H1 (cell line): ENCODE measurements at regions of chr11 and their contacts with region 1.

Region 1: GRCh38 chr11:18115360-18116127 is 9.7 kb upstream of the SAAL1 start:
- DNase-seq: peak; percentile 60 to 84
- H3K4me3 ChIP-seq: no peak overlapping the region
- H3K27ac ChIP-seq: no peak overlapping the region
- H3K4me1 ChIP-seq: no peaks in the 10 kb centered on the region
- H3K27me3 ChIP-seq: peaks cover 0 to 4% (median 2%) of the 10 kb centered on the region in 4 experiments; a peak in 4 of 7 replicates
- CTCF ChIP-seq: peak; percentile 78 to 90 (median 88)
- EP300 ChIP-seq: no peak
- POLR2A ChIP-seq: no peak
- RAD21 ChIP-seq: peak; percentile 95 to 96

Region 2: GRCh38 chr11:17827006-17827405 is 288.5 kb before region 1 on chr11:
- CTCF ChIA-PET with region 1: no interaction called
- POLR2A ChIA-PET with region 1: no interaction called
- DNase-seq: no peak
- H3K4me3 ChIP-seq: no peak overlapping the region
- H3K27ac ChIP-seq: no peak overlapping the region
- H3K4me1 ChIP-seq: 0 out of 7 replicates have a peak, but pooled peaks cover 0 to 2% (median 0%) of the 10 kb centered on the region in 4 experiments
- H3K27me3 ChIP-seq: no peaks in the 10 kb centered on the region
- CTCF ChIP-seq: peak in 2 of 3 experiments; percentile 64 to 72; a peak in 3 of 4 replicates
- EP300 ChIP-seq: no peak
- POLR2A ChIP-seq: no peak
- RAD21 ChIP-seq: peak; percentile 72 to 84

Region 3: GRCh38 chr11:17954395-17955252 is 160.9 kb before region 1 on chr11:
- CTCF ChIA-PET with region 1: no interaction called
- POLR2A ChIA-PET with region 1: no interaction called
- DNase-seq: no peak
- H3K4me3 ChIP-seq: no peak overlapping the region
- H3K27ac ChIP-seq: no peak overlapping the region
- H3K4me1 ChIP-seq: no peaks in the 10 kb centered on the region
- H3K27me3 ChIP-seq: no peaks in the 10 kb centered on the region
- CTCF ChIP-seq: no peak
- EP300 ChIP-seq: no peak
- POLR2A ChIP-seq: no peak
- RAD21 ChIP-seq: no peak

Region 4: DNA sequence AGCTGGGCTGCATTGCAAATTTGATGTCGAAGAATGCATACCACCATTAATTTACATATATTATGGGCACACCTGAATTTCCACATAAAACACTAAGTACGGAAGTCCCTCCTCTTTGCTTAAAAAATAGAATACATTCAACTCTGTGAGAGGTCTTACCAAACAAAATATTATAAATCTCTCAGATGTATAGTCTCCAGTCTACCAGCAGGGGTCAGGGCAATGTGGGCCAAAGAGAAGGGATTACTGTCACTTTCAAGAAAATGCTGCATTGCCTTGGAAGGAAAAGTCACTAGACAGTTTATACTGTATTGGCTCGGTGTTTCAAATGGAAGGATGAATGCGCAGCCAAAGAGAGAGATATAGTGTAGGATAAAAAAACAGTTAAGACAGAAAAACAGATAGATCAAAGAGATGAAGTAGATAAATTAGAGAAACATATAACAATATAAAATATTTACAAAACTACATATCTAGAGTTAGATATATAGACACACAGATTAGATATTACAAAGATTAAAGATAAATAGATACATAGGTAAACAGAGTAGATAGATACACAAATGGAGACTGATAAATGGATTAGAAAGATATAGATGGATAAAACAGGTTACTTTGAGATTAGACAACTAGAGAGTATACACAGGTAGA is 123.6 kb before region 1 on chr11:
- CTCF ChIA-PET with region 1: no interaction called
- POLR2A ChIA-PET with region 1: no interaction called
- DNase-seq: no peak
- H3K4me3 ChIP-seq: no peak overlapping the region
- H3K27ac ChIP-seq: no peak overlapping the region
- H3K4me1 ChIP-seq: no peaks in the 10 kb centered on the region
- H3K27me3 ChIP-seq: no peaks in the 10 kb centered on the region
- CTCF ChIP-seq: peak in 2 of 3 experiments; percentile 55 to 71; a peak in 3 of 4 replicates
- EP300 ChIP-seq: no peak
- POLR2A ChIP-seq: no peak
- RAD21 ChIP-seq: peak; percentile 57 to 67

Region 5: GRCh38 chr11:18171377-18172000 is 55.9 kb after region 1 on chr11:
- CTCF ChIA-PET with region 1: interaction called, 43 read pairs
- POLR2A ChIA-PET with region 1: interaction called, 4 read pairs
- DNase-seq: no peak
- H3K4me3 ChIP-seq: no peak overlapping the region
- H3K27ac ChIP-seq: no peak overlapping the region
- H3K4me1 ChIP-seq: no peaks in the 10 kb centered on the region
- H3K27me3 ChIP-seq: no peaks in the 10 kb centered on the region
- CTCF ChIP-seq: peak; percentile 72 to 80 (median 74)
- EP300 ChIP-seq: no peak
- POLR2A ChIP-seq: no peak
- RAD21 ChIP-seq: peak; percentile 78

Region 6: GRCh38 chr11:18203723-18204122 is 88.2 kb after region 1 on chr11:
- CTCF ChIA-PET with region 1: interaction called, 55 read pairs
- POLR2A ChIA-PET with region 1: interaction called, 8 read pairs
- DNase-seq: peak in 1 of 2 experiments; percentile 58
- H3K4me3 ChIP-seq: no peak overlapping the region
- H3K27ac ChIP-seq: no peak overlapping the region
- H3K4me1 ChIP-seq: no peaks in the 10 kb centered on the region
- H3K27me3 ChIP-seq: no peaks in the 10 kb centered on the region
- CTCF ChIP-seq: peak; percentile 53 to 91 (median 80)
- EP300 ChIP-seq: no peak
- POLR2A ChIP-seq: no peak
- RAD21 ChIP-seq: peak; percentile 90 to 94

Region 7: DNA sequence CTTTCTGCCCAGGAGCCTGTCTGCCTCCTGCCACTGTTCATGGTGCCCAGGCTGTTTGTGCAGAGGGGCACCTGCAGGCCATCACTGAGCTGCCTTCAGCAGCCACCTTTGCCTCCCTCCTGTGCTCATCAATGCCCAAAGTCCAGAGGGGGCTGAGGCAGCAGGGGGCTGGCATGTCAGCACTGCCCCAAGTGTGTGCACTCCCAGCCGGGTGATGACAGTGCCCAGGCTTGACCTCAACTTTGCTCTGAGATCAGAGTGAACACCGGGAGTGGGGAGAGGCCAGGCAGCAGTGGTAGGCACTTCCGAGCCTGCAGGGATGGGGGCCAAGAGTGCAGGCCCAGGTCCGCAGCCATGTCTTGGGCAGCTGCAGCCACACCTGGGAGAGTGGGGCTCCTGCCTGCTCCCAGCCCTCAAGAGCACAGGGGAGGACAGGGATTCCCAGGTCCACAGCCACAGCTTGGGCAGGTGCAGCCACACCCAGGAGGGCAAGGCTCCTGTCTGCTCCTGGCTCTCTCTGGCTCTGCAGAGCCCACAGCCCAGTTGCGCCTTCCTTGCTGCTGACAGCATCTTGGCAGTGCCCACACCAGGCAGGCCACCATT is 105.8 kb after region 1 on chr11:
- CTCF ChIA-PET with region 1: interaction called, 18 read pairs
- POLR2A ChIA-PET with region 1: no interaction called
- DNase-seq: no peak
- H3K4me3 ChIP-seq: no peak overlapping the region
- H3K27ac ChIP-seq: no peak overlapping the region
- H3K4me1 ChIP-seq: no peaks in the 10 kb centered on the region
- H3K27me3 ChIP-seq: no peaks in the 10 kb centered on the region
- CTCF ChIP-seq: no peak
- EP300 ChIP-seq: no peak
- POLR2A ChIP-seq: no peak
- RAD21 ChIP-seq: no peak

Region 8: DNA sequence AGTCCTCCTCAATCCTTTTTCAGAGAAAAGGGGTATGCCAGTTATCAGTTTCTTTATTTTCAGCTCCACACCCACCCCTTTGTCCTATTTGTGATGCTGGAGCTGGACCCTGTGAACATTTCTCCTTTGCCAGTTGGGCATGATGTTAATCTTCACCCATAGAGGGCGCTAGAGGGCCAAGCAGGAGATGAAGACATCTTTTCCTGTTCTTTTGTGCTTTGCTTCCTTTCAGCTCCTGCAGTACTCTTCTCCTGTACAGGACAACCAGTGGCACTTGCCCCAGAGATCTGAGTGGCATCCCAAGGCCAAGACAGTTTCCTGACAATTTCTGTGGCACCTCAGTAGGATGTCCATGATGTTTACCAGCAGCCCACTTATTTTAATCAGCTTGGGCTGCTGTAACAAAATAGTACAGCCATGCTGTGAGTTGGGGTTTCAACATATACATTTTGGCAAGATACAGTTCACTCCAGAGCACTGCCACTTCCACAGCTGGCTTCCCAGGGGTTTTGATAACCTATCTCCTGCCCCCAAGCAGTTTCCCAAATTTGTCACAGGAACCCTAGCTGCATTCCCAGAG is 128.3 kb after region 1 on chr11:
- CTCF ChIA-PET with region 1: interaction called, 10 read pairs
- POLR2A ChIA-PET with region 1: no interaction called
- DNase-seq: peak; percentile 19 to 72
- H3K4me3 ChIP-seq: no peak overlapping the region
- H3K27ac ChIP-seq: no peak overlapping the region
- H3K4me1 ChIP-seq: no peaks in the 10 kb centered on the region
- H3K27me3 ChIP-seq: no peaks in the 10 kb centered on the region
- CTCF ChIP-seq: peak; percentile 16 to 90 (median 69)
- EP300 ChIP-seq: no peak
- POLR2A ChIP-seq: no peak
- RAD21 ChIP-seq: peak; percentile 85 to 88

Region 9: DNA sequence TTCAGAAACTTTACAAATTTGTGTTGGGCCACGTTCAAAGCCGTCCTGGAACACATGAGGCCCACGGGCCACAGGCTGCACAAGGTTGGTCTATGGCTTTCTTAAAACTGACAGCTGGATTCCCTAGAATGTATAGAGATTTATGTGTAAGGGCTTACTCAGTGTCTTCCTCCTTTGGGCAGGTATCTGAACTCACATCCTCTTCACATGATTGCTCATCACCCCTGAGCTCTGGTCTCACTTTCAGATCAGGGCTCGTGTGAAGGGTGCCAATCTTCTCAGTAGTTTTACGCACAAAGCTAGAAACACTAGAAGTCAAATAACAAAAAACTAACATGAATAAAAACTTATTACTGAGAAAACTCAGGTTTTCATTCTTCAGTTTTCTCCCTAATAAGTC is 179.3 kb after region 1 on chr11:
- CTCF ChIA-PET with region 1: interaction called, 10 read pairs
- POLR2A ChIA-PET with region 1: no interaction called
- DNase-seq: no peak
- H3K4me3 ChIP-seq: no peak overlapping the region
- H3K27ac ChIP-seq: no peak overlapping the region
- H3K4me1 ChIP-seq: no peaks in the 10 kb centered on the region
- H3K27me3 ChIP-seq: no peaks in the 10 kb centered on the region
- CTCF ChIP-seq: no peak
- EP300 ChIP-seq: no peak
- POLR2A ChIP-seq: no peak
- RAD21 ChIP-seq: no peak

Region 10: GRCh38 chr11:18347471-18348125 is 232.1 kb after region 1 on chr11:
- CTCF ChIA-PET with region 1: no interaction called
- POLR2A ChIA-PET with region 1: no interaction called
- DNase-seq: no peak
- H3K4me3 ChIP-seq: no peak overlapping the region
- H3K27ac ChIP-seq: no peak overlapping the region
- H3K4me1 ChIP-seq: no peaks in the 10 kb centered on the region
- H3K27me3 ChIP-seq: no peaks in the 10 kb centered on the region
- CTCF ChIP-seq: no peak
- EP300 ChIP-seq: no peak
- POLR2A ChIP-seq: no peak
- RAD21 ChIP-seq: no peak